ENCODE measurements at regions of chr19 and their contacts with region 1.

Region 1: GRCh38 chr19:55339048-55339888 is at the start of gene KMT5C:
- DNase-seq: peak; percentile 100
- H3K4me3 ChIP-seq: peak within 1 kb of the TSS; percentile 66 to 74
- H3K4me3 Mint-ChIP-seq: peak within 1 kb of the TSS; percentile 90 to 96 (median 93)
- H3K27ac ChIP-seq: peak within 1 kb of the TSS; percentile 90
- H3K27ac Mint-ChIP-seq: peak within 1 kb of the TSS; percentile 97 to 100 (median 99)
- H3K4me1 ChIP-seq: peaks cover 24% of the 10 kb centered on the region
- H3K4me1 Mint-ChIP-seq: peaks cover 9 to 35% (median 18%) of the 10 kb centered on the region in 4 donors
- H3K27me3 ChIP-seq: no peaks in the 10 kb centered on the region
- H3K27me3 Mint-ChIP-seq: peaks cover 1 to 12% of the 10 kb centered on the region in 2 donors
- total RNA-seq, gene KMT5C: 23.1 to 23.5 TPM

Region 2: DNA sequence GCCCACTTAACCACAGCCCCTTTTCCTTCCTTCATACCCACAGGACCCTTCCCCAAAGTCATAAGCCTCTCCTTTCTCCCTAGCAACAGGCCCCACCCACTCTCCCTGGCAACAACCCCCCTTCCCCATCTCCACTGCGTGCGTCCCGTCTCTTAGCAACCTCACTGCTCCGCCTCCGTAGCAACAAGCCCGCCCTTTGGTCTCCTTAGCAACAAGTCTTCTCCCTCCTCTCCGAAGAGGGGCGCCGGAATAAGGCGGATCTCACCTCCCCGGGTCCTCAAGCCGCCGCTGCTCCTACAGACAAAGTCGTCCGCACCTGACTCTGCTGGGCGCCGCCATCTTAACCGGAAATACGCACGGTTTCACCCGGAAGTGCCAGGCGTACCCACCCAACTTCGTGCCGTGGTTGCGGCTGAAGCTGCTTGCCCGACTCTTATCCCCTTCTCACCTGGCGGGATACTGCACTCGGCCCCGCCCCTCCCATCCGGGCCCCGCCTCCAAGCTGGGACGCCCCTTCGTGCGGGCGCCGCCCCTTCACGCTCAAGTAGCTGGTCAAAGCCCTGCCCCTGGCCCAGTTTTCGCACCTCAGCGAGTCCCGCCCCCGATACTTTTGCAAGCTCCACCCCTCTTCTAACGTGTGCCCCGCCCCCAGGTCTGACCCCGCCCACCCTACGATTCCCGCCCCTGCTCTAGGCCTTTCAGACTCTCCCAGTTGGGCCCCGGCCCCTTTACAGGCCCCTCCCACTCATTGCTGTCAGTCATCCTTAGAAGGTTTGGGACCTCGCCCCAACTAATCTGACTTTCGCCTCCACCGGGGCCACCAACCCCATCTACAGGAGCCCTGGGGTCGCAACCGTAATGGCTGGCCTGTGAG is 59.3 kb before region 1 on chr19 and contains the start of gene HSPBP1:
- CTCF ChIA-PET with region 1: interaction called, 5 read pairs
- POLR2A ChIA-PET with region 1: interaction called, 21 read pairs
- intact Hi-C with region 1: loop called (anchors 1 kb)
- DNase-seq: peak; percentile 96 to 97 (median 97)
- H3K4me3 ChIP-seq: peak within 1 kb of the TSS; percentile 95 to 98
- H3K4me3 Mint-ChIP-seq: peak within 1 kb of the TSS; percentile 92 to 100 (median 98)
- H3K27ac ChIP-seq: peak within 1 kb of the TSS; percentile 69
- H3K27ac Mint-ChIP-seq: peak within 1 kb of the TSS; percentile 87 to 100 (median 100)
- H3K4me1 ChIP-seq: peaks cover 39% of the 10 kb centered on the region
- H3K4me1 Mint-ChIP-seq: peaks cover 24 to 55% (median 34%) of the 10 kb centered on the region in 4 donors
- H3K27me3 ChIP-seq: no peaks in the 10 kb centered on the region
- H3K27me3 Mint-ChIP-seq: no peaks in the 10 kb centered on the region
- total RNA-seq, gene HSPBP1: 17.9 to 18.5 TPM

Region 3: DNA sequence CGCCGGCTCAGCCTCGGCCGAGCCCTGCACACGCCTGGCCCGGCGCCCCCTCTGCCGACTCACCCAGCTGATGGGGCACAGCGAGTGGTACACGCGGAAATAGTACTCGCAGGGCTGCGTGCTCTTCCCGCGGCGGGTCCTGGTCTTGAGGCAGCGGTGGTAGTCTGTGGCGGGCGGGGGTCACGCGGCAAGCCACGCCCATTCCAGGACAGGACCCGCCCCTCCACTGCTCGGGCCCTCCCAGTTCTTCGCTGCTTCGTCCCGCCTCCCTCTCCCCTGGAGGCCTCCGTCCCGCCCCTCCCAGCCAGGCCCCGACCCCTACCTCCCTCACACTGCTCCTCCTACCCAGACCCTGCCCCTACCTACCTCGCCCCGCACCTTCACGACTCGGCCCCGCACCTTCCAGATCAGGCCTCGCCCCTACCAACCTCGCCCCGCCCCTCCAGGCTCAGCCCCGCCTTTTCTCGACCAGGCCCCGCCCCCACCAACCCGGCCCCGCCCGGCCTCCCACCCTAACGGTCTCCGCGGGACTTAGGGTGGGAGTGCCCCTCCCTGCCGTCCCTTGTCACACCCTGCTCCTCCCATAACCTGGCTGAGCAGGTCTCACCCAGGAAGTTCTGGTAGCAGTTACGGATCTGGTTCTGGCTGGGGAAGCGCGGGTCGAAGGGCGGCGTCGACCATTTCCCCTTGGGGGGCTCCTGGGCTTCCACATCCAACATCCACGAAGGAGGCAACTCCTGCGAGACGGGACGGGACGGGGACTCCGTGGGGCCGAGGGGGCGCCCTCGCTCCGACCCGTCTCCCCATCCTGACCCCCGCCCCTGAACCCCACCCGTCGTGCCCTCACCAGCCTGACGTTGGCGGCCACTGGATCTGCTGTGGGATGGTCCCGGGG is 14.8 kb after region 1 on chr19:
- CTCF ChIA-PET with region 1: interaction called, 7 read pairs
- POLR2A ChIA-PET with region 1: interaction called, 15 read pairs
- intact Hi-C with region 1: loop called (anchors 1 kb)
- DNase-seq: peak; percentile 54 to 74 (median 70)
- H3K4me3 ChIP-seq: peak overlapping the region in 1 of 2 donors; percentile 52
- H3K4me3 Mint-ChIP-seq: peak overlapping the region; percentile 69 to 84 (median 80)
- H3K27ac ChIP-seq: no peak overlapping the region
- H3K27ac Mint-ChIP-seq: peak overlapping the region in 5 of 7 donors; percentile 48 to 84 (median 57)
- H3K4me1 ChIP-seq: peaks cover 18% of the 10 kb centered on the region
- H3K4me1 Mint-ChIP-seq: peaks cover 4 to 33% (median 8%) of the 10 kb centered on the region in 4 donors
- H3K27me3 ChIP-seq: peaks cover 29% of the 10 kb centered on the region
- H3K27me3 Mint-ChIP-seq: peaks cover 30 to 47% of the 10 kb centered on the region in 2 donors

Region 4: DNA sequence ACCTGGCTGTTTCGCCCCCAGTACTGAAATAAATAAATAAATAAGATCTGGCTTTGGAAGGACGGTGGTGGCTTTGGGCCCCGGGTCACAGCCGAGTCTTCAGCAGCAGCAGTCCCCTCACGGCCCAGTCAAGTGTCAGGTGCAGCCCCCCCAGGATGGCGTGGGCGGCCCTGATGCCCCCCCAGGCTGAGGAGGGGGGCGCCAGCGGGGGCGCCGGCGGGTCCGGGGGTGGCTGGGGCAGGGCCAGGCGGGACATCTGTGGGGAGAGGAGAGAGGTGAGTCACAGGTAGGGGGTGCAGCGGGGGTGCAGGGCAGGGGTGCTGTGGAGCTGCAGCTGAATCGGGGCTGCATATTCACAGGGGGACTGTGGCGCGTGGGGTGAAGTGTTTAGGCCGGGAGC is 26.7 kb after region 1 on chr19:
- CTCF ChIA-PET with region 1: no interaction called
- POLR2A ChIA-PET with region 1: no interaction called
- intact Hi-C with region 1: no loop called
- DNase-seq: no peak
- H3K4me3 ChIP-seq: no peak overlapping the region
- H3K4me3 Mint-ChIP-seq: no peak overlapping the region
- H3K27ac ChIP-seq: no peak overlapping the region
- H3K27ac Mint-ChIP-seq: no peak overlapping the region
- H3K4me1 ChIP-seq: peaks cover 7% of the 10 kb centered on the region
- H3K4me1 Mint-ChIP-seq: peaks cover 4 to 5% (median 5%) of the 10 kb centered on the region in 4 donors
- H3K27me3 ChIP-seq: peaks cover 15% of the 10 kb centered on the region
- H3K27me3 Mint-ChIP-seq: peaks cover 13 to 20% of the 10 kb centered on the region in 2 donors

Region 5: DNA sequence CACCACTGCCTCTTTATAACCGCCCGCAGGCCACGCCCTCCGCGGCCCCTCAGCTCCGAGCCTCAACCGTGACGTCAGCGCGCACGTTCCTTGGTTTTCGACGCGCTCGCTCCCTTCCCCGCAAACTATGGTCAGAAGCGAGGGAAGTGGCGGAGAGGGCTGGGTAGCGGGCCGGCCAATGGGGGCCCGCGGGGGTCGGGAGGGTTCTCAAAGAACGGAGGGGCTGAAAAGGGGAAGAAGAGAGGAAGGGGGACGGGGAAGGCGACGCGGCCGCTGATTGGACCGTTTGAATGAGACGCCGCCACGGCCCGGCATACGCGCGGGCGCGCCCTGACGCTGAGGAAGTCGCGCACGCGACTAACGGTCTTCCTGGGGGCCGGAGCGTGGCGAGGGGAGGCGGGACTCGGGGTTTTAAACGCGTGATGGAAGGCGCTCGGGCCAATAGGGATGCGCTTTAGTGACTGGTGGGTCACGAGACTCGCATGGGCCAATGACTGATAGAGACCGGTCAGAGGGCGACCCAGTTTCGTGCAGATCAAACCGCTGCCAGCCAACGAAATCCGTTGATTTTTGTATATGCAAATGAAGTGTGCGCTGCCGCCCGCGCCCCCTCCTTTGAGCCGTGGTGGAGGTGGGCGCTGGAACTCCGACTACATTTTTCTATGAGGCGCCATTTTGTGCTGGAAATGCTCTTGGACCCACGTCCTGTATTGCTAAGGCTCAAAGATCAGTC is 68.7 kb after region 1 on chr19:
- CTCF ChIA-PET with region 1: interaction called, 3 read pairs
- POLR2A ChIA-PET with region 1: interaction called, 34 read pairs
- intact Hi-C with region 1: loop called (anchors 1 kb)
- DNase-seq: peak; percentile 96 to 99 (median 98)
- H3K4me3 ChIP-seq: peak overlapping the region; percentile 64 to 69
- H3K4me3 Mint-ChIP-seq: peak overlapping the region; percentile 89 to 96 (median 93)
- H3K27ac ChIP-seq: peak overlapping the region; percentile 99
- H3K27ac Mint-ChIP-seq: peak overlapping the region; percentile 98 to 100 (median 99)
- H3K4me1 ChIP-seq: peaks cover 24% of the 10 kb centered on the region
- H3K4me1 Mint-ChIP-seq: peaks cover 22 to 32% (median 28%) of the 10 kb centered on the region in 4 donors
- H3K27me3 ChIP-seq: no peaks in the 10 kb centered on the region
- H3K27me3 Mint-ChIP-seq: no peaks in the 10 kb centered on the region

Region 6: GRCh38 chr19:55599468-55600279 is 260.4 kb after region 1 on chr19 and contains the start of gene FIZ1:
- CTCF ChIA-PET with region 1: no interaction called
- POLR2A ChIA-PET with region 1: interaction called, 18 read pairs
- intact Hi-C with region 1: no loop called
- DNase-seq: peak; percentile 96 to 98 (median 97)
- H3K4me3 ChIP-seq: peak within 1 kb of the TSS; percentile 93 to 99
- H3K4me3 Mint-ChIP-seq: peak within 1 kb of the TSS; percentile 98 to 100 (median 98)
- H3K27ac ChIP-seq: peak within 1 kb of the TSS; percentile 89
- H3K27ac Mint-ChIP-seq: peak within 1 kb of the TSS; percentile 96 to 100 (median 99)
- H3K4me1 ChIP-seq: peaks cover 28% of the 10 kb centered on the region
- H3K4me1 Mint-ChIP-seq: peaks cover 22 to 38% (median 25%) of the 10 kb centered on the region in 4 donors
- H3K27me3 ChIP-seq: no peaks in the 10 kb centered on the region
- H3K27me3 Mint-ChIP-seq: no peaks in the 10 kb centered on the region
- total RNA-seq, gene FIZ1: 20.8 to 26.4 TPM